ENCODE measurements at regions of chr1 and their contacts with region 1.

Region 1: GRCh38 chr1:48677306-48678287 is 99.1 kb downstream of the BEND5 start:
- DNase-seq: peak; percentile 53
- H3K4me3 ChIP-seq: no peak overlapping the region
- H3K27ac ChIP-seq: no peak overlapping the region
- H3K4me1 ChIP-seq: no peaks in the 10 kb centered on the region
- H3K27me3 ChIP-seq: no peaks in the 10 kb centered on the region
- CTCF ChIP-seq: peak; percentile 58

Region 2: GRCh38 chr1:48139275-48139674 is 538.3 kb before region 1 on chr1:
- intact Hi-C with region 1: no loop called
- DNase-seq: no peak
- H3K4me3 ChIP-seq: no peak overlapping the region
- H3K27ac ChIP-seq: no peak overlapping the region
- H3K4me1 ChIP-seq: no peaks in the 10 kb centered on the region
- H3K27me3 ChIP-seq: no peaks in the 10 kb centered on the region
- CTCF ChIP-seq: no peak

Region 3: GRCh38 chr1:48309564-48310082 is 368.0 kb before region 1 on chr1:
- intact Hi-C with region 1: no loop called
- DNase-seq: no peak
- H3K4me3 ChIP-seq: no peak overlapping the region
- H3K27ac ChIP-seq: no peak overlapping the region
- H3K4me1 ChIP-seq: no peaks in the 10 kb centered on the region
- H3K27me3 ChIP-seq: no peaks in the 10 kb centered on the region
- CTCF ChIP-seq: no peak

Region 4: DNA sequence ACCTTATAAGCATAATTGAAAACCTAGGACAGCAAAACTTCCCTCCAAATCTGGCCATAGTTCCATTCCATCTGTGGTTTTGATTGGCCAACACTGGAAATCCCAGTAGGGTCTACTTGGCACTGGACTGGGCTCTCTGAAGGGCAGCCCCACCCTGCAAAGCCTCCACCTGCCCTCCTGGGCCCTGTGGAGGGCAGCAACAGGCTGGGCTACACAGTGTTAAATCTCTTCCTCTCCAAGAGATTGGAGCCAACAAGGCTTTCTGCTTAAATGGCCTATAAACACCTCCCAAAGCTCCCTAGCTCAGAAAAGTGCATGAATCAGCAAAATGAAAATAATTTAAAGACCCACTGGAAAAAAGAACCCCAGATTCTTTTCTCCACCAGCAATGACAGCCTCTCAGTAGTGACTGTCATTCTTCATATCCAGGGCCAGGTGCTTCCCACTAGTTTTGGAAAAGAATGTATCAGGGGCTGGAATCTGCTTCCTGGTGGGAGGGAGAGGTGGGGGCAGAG is 40.6 kb after region 1 on chr1:
- intact Hi-C with region 1: no loop called
- DNase-seq: no peak
- H3K4me3 ChIP-seq: no peak overlapping the region
- H3K27ac ChIP-seq: no peak overlapping the region
- H3K4me1 ChIP-seq: no peaks in the 10 kb centered on the region
- H3K27me3 ChIP-seq: no peaks in the 10 kb centered on the region
- CTCF ChIP-seq: no peak

Region 5: DNA sequence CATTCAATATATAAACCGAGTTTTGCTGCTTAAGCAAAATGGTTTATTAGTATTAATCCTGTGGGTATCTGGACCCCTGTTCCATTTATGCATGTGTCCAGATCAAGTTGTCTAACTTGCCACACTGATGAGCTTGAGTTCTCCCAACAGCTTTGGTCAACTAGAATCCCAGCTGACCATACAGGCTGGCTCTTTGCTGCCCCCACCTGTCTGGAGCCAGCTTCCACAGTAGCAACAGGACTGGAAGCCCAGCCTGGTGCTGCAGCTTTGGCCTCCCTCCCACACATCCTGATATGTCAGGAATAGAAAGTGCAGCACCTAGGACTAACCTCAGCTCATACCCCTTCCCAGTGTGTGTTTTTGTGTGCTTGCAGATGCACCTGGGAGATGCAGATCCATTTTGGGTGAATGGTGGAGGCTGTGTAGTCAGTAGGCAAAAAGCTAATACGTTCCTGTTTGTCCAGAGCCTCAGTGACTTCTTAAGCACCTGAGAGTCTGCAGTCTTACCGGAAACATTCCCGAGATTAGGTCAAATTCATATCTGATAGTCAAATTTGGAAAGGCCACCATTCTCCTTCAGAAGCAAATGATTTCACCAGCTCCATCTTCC is 140.0 kb after region 1 on chr1:
- intact Hi-C with region 1: loop called (anchors 5 kb)
- DNase-seq: peak; percentile 48
- H3K4me3 ChIP-seq: no peak overlapping the region
- H3K27ac ChIP-seq: no peak overlapping the region
- H3K4me1 ChIP-seq: no peaks in the 10 kb centered on the region
- H3K27me3 ChIP-seq: no peaks in the 10 kb centered on the region
- CTCF ChIP-seq: peak; percentile 60

Region 6: GRCh38 chr1:48947761-48948537 is 270.4 kb after region 1 on chr1:
- intact Hi-C with region 1: no loop called
- DNase-seq: no peak
- H3K4me3 ChIP-seq: no peak overlapping the region
- H3K27ac ChIP-seq: no peak overlapping the region
- H3K4me1 ChIP-seq: no peaks in the 10 kb centered on the region
- H3K27me3 ChIP-seq: no peaks in the 10 kb centered on the region
- CTCF ChIP-seq: no peak

Region 7: DNA sequence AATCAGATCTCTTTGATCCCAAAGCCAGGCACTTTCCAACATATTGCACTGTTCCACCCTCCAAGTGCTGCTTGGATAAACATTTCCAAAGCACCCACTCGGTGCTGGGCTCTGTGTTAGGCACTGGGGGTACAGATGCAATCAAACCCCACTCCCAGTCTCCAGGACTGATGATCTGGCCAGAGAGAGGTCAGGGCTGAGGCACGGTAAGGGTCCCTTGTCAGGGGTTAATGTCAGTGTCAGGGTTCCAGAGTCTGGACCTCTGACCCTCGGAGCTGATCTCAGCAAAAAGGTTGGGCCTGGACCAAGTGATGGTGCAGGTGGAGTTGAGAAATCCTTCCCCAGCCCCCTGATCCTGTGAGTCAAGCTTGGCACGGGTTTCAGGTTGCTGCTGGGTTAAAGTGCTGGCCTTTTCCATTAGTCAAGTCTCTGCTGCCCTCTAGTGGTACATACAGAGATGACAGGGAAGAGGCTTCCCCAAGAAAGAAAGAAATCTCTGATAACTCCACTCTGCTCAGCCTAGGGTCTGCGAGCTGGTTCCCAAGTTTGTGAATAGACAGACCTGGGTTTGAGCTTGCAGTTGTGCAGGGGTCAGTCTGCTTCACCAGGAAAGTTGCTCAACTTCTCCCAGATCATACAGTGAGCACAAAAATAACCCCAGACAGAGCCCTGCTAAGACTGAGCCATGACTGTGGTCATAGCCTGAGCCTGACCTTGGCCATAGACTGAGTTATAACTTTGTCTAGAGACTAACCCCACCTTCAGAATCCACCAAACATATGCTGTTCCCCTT is 1671.0 kb after region 1 on chr1:
- intact Hi-C with region 1: loop called (anchors 5 kb)
- DNase-seq: peak; percentile 64
- H3K4me3 ChIP-seq: no peak overlapping the region
- H3K27ac ChIP-seq: no peak overlapping the region
- H3K4me1 ChIP-seq: no peaks in the 10 kb centered on the region
- H3K27me3 ChIP-seq: no peaks in the 10 kb centered on the region
- CTCF ChIP-seq: peak; percentile 80

Measured in colonic mucosa (tissue), 4 donors.